Right ventricle myocardium superior (tissue), 1 donor: ENCODE measurements at regions of chr17 and their contacts with region 1.

Region 1: GRCh38 chr17:29931231-29931932 is 1.4 kb upstream of the SSH2 start:
- DNase-seq: peak; percentile 60
- ATAC-seq: peak; percentile 77

Region 2: GRCh38 chr17:29807520-29808351 is 123.6 kb before region 1 on chr17:
- intact Hi-C with region 1: loop called (anchors 2 kb)
- DNase-seq: peak; percentile 56
- ATAC-seq: peak; percentile 68

Region 3: DNA sequence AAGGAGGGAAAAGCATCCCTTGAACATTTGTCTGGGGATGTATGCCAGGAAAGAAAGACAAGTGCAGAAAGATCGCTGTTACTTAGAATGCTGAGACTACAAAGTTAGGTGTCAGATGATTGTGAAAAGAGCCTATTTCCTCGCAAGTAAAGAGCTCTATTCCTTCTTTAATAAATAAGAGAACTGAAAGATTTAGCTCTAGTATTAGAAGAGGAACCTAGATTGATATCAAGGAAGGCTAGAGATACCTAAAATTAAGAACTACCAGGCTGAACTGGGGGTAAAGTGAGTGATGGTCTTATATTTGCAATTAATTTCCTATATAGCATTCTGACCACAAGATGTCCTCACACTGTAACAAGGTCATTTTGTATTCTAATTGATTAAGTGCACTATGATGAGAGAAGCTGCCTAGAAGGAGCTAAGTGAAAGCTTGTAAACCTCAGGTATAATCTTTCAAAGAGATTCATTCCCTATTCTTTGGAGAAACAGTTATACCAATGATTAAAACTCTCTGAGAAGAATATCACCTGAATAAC is 63.7 kb before region 1 on chr17:
- intact Hi-C with region 1: loop called (anchors 10 kb)
- DNase-seq: no peak
- ATAC-seq: no peak

Region 4: GRCh38 chr17:30148376-30148775 is 217.0 kb after region 1 on chr17:
- intact Hi-C with region 1: no loop called
- DNase-seq: no peak
- ATAC-seq: no peak